Activated CD8-positive, alpha-beta T cell treated with anti-CD3 and anti-CD28 coated beads for 36 hours (primary cell): ENCODE measurements at regions of chr17 and their contacts with region 1.

Region 1: DNA sequence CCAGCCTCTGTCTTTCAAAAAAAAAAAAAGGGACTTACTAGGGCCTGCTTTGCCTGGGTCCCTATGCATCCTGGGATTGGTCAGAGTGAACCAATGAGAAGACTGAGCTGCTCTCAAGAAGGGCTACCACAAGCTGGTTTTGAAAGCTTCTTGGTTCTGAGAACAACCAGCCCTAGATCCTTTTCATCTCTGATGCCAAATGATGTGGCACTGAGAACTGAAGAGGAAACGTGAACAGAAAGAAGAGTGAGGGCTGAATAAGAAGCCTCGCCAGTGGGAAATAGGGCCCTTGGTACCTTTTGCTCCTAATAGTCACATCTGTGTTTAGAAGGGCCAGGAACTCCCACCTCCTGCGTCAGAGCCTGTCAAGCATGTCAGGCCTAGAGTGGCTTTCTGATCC is 10.7 kb downstream of the TACO1 start:
- DNase-seq: peak; percentile 48
- ATAC-seq: peak; percentile 81
- H3K4me3 Mint-ChIP-seq: no peak overlapping the region
- H3K27ac Mint-ChIP-seq: peak overlapping the region; percentile 84
- H3K4me1 Mint-ChIP-seq: peaks cover 29% of the 10 kb centered on the region
- H3K27me3 Mint-ChIP-seq: no peaks in the 10 kb centered on the region
- CTCF ChIP-seq: no peak

Region 2: DNA sequence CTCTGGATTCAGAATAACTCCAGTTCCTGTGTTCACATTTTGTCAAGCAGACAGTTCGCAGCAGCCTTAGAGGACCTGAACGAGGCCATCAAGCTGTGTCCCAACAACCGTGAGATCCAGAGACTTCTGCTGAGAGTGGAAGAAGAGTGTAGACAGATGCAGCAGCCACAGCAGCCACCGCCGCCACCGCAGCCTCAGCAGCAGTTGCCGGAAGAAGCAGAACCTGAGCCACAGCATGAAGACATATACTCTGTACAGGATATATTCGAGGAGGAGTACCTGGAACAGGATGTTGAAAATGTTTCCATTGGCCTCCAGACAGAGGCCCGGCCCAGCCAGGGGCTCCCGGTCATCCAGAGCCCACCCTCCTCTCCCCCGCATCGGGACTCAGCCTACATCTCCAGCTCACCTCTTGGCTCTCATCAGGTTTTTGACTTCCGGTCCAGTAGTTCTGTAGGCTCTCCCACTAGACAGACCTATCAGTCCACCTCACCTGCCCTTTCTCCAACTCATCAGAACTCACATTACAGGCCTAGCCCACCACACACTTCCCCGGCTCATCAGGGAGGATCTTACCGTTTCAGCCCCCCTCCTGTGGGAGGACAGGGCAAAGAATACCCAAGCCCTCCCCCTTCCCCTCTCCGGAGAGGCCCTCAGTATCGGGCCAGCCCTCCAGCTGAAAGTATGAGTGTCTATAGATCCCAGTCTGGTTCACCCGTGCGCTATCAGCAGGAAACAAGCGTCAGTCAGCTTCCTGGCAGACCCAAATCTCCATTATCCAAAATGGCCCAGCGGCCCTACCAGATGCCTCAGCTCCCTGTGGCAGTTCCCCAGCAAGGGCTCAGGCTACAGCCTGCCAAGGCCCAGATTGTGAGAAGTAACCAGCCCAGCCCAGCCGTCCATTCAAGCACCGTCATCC is 191.1 kb before region 1 on chr17:
- CTCF ChIA-PET with region 1: interaction called, 188 read pairs
- POLR2A ChIA-PET with region 1: interaction called, 3 read pairs
- intact Hi-C with region 1: no loop called
- DNase-seq: peak; percentile 73
- ATAC-seq: peak; percentile 73
- H3K4me3 Mint-ChIP-seq: peak overlapping the region; percentile 1
- H3K27ac Mint-ChIP-seq: peak overlapping the region; percentile 69
- H3K4me1 Mint-ChIP-seq: peaks cover 11% of the 10 kb centered on the region
- H3K27me3 Mint-ChIP-seq: no peaks in the 10 kb centered on the region
- CTCF ChIP-seq: no peak

Region 3: GRCh38 chr17:63445979-63446691 is 165.2 kb before region 1 on chr17 and contains the start of gene CYB561:
- CTCF ChIA-PET with region 1: interaction called, 15 read pairs
- POLR2A ChIA-PET with region 1: interaction called, 3 read pairs
- intact Hi-C with region 1: loop called (anchors 5 kb)
- DNase-seq: peak; percentile 68
- ATAC-seq: peak; percentile 68
- H3K4me3 Mint-ChIP-seq: peak within 1 kb of the TSS; percentile 69
- H3K27ac Mint-ChIP-seq: peak within 1 kb of the TSS; percentile 80
- H3K4me1 Mint-ChIP-seq: peaks cover 21% of the 10 kb centered on the region
- H3K27me3 Mint-ChIP-seq: peaks cover 3% of the 10 kb centered on the region
- CTCF ChIP-seq: peak; percentile 53
- total RNA-seq, gene CYB561: 1.5 to 2.2 TPM

Region 4: DNA sequence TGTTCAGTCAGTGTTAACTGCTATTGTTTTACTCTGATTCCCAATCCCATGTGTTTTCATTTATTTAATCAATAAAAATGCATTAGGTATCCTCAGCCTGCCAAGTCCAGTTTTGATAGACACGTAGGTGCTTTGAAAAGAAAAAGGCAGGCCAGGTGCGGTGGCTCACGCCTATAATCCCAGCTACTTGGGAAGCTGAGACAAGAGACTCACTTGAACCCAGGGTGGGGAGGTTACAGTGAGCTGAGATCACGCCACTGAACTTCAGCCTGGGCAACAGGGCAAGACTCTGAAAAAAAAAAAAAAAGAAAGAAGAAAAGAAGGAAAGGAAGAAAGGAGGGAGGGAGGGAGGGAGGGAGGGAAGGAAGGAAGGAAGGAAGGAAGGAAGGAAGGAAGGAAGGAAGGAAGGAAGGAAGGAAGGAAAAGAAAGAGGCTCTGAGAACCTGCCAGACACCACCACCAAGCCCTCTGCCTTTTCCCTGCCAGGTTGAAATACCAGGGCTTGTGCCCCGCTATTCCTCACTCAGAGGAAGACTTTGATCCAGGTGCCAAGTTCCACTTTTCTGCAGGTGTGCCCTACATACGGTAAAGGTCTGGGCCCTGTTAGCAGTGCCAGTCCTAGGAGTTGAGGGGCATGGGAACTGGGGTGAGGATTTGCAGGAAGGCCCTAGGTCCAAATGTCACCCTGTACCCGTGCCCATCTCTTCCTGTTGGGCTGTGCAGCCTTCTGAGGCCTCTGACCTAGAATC is 98.3 kb before region 1 on chr17:
- CTCF ChIA-PET with region 1: no interaction called
- POLR2A ChIA-PET with region 1: no interaction called
- intact Hi-C with region 1: no loop called
- DNase-seq: no peak
- ATAC-seq: no peak
- H3K4me3 Mint-ChIP-seq: no peak overlapping the region
- H3K27ac Mint-ChIP-seq: no peak overlapping the region
- H3K4me1 Mint-ChIP-seq: peaks cover 13% of the 10 kb centered on the region
- H3K27me3 Mint-ChIP-seq: peaks cover 5% of the 10 kb centered on the region
- CTCF ChIP-seq: no peak

Region 5: GRCh38 chr17:63555500-63556156 is 55.7 kb before region 1 on chr17:
- CTCF ChIA-PET with region 1: interaction called, 18 read pairs
- POLR2A ChIA-PET with region 1: interaction called, 4 read pairs
- intact Hi-C with region 1: no loop called
- DNase-seq: no peak
- ATAC-seq: no peak
- H3K4me3 Mint-ChIP-seq: no peak overlapping the region
- H3K27ac Mint-ChIP-seq: no peak overlapping the region
- H3K4me1 Mint-ChIP-seq: peaks cover 66% of the 10 kb centered on the region
- H3K27me3 Mint-ChIP-seq: no peaks in the 10 kb centered on the region
- CTCF ChIP-seq: no peak

Region 6: GRCh38 chr17:63600569-63601438 is 10.6 kb before region 1 on chr17 and contains the start of gene TACO1:
- CTCF ChIA-PET with region 1: interaction called, 35 read pairs
- POLR2A ChIA-PET with region 1: interaction called, 13 read pairs
- intact Hi-C with region 1: no loop called
- DNase-seq: peak; percentile 83
- ATAC-seq: peak; percentile 95
- H3K4me3 Mint-ChIP-seq: peak within 1 kb of the TSS; percentile 95
- H3K27ac Mint-ChIP-seq: peak within 1 kb of the TSS; percentile 92
- H3K4me1 Mint-ChIP-seq: peaks cover 35% of the 10 kb centered on the region
- H3K27me3 Mint-ChIP-seq: no peaks in the 10 kb centered on the region
- CTCF ChIP-seq: no peak
- total RNA-seq, gene TACO1: 27.0 to 30.4 TPM

Region 7: DNA sequence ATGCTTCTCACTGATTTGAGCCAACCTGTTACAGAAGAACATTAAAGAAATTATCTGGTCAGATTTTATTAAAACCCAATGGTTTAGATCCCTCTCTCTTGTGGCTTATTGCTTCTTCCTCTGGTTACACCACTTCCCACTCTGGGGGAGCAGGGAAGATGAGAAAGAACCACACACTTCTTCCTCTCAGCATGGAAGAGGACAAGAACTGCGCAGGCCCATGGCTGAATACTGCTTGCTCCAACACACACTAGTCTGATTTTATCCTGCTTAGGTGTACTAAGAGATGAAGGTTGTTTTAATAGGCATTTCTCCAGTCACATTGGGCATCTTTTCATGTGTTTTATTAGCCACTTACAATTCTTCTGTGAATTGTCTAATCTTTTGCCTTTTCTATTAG is 38.5 kb after region 1 on chr17:
- CTCF ChIA-PET with region 1: no interaction called
- POLR2A ChIA-PET with region 1: no interaction called
- intact Hi-C with region 1: no loop called
- DNase-seq: no peak
- ATAC-seq: no peak
- H3K4me3 Mint-ChIP-seq: no peak overlapping the region
- H3K27ac Mint-ChIP-seq: no peak overlapping the region
- H3K4me1 Mint-ChIP-seq: peaks cover 13% of the 10 kb centered on the region
- H3K27me3 Mint-ChIP-seq: no peaks in the 10 kb centered on the region
- CTCF ChIP-seq: no peak

Region 8: DNA sequence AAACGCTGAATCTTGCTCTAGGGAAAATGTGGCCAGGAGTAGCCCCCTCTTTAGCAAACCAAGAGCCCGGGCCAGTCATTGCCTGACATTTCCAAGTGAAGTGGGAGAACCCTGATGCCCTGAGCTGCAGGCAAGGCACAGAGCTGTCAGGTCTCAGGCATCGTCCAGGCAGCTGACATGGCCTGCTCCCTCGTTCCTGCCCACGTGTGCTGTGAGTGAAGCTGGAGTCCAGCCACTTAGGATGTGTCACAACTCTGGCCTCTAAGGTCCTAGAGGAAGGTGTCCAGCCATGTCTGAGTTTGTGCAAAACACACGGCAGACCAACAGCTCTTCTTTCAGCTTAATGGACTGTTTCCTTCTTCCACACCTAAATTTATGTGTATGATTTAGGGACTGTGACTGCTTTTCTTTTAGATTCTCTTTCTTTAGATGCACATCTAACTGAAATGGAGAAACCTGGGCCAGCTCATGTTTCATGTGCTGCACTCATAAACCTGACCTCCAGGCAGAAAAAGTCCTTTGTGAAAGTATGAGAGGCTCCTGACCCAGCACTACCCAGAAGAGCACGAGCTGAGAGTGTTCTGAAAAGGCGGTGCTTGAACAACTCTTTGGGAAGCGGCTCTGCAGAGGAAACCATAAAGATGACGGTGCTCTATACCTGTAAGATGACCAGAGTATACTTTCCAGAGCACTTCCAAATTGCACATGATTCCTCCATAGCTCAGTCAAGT is 103.4 kb after region 1 on chr17:
- CTCF ChIA-PET with region 1: interaction called, 11 read pairs
- POLR2A ChIA-PET with region 1: no interaction called
- intact Hi-C with region 1: no loop called
- DNase-seq: no peak
- ATAC-seq: no peak
- H3K4me3 Mint-ChIP-seq: no peak overlapping the region
- H3K27ac Mint-ChIP-seq: no peak overlapping the region
- H3K4me1 Mint-ChIP-seq: peaks cover 9% of the 10 kb centered on the region
- H3K27me3 Mint-ChIP-seq: no peaks in the 10 kb centered on the region
- CTCF ChIP-seq: no peak

Region 9: DNA sequence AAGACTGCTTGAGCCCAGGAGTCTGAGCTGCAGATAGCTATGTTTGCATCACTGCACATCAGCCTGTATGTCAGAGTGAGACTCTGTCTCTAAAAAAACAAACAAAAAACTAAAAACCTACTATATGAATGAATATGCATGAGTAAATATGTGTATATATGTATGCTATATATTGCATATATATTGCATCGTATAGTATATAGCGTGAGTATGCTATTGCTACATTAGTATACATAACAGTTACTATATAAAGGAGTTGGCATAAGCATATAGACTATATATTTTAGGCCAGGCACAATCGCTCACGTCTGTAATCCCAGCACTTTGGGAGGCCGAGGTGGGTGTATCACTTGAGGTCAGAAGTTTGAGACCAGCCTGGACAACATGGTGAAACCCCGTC is 178.7 kb after region 1 on chr17:
- CTCF ChIA-PET with region 1: no interaction called
- POLR2A ChIA-PET with region 1: no interaction called
- intact Hi-C with region 1: no loop called
- DNase-seq: no peak
- ATAC-seq: no peak
- H3K4me3 Mint-ChIP-seq: no peak overlapping the region
- H3K27ac Mint-ChIP-seq: no peak overlapping the region
- H3K4me1 Mint-ChIP-seq: peaks cover 2% of the 10 kb centered on the region
- H3K27me3 Mint-ChIP-seq: no peaks in the 10 kb centered on the region
- CTCF ChIP-seq: no peak